AG04449 (cell line): ENCODE measurements at regions of chr6 and their contacts with region 1.

Region 1: DNA sequence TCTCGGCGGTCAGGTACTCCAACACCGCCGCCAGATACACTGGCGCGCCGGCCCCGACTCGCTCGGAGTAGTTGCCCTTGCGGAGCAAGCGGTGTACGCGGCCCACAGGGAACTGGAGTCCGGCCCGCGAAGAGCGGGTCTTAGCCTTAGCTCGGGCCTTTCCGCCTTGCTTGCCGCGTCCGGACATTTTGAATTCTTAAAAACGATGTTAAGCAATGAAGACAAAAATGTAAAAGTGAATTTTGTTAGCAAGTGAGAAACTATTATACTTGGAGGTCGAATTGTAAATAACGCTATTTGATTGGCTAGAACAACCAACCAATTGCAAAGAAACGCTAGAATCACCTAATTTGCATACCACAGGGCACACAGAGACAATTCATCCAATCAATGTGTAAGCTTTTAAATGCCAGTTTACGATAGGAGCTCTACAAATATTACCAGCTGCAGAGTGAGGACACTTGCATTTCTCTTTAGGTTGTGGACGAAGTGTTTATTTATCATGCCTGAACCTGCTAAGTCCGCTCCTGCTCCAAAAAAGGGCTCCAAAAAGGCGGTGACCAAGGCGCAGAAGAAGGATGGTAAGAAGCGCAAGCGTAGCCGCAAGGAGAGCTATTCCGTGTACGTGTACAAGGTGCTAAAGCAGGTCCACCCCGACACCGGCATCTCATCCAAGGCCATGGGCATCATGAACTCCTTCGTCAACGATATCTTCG is 112.0 kb downstream of the HFE start:
- DNase-seq: no peak
- H3K4me3 ChIP-seq: peak overlapping the region; percentile 85
- CTCF ChIP-seq: no peak

Region 2: GRCh38 chr6:26045065-26045927 is 153.9 kb before region 1 on chr6:
- CTCF ChIA-PET with region 1: no interaction called
- POLR2A ChIA-PET with region 1: interaction called, 14 read pairs
- DNase-seq: no peak
- H3K4me3 ChIP-seq: peak overlapping the region; percentile 64
- CTCF ChIP-seq: no peak

Region 3: GRCh38 chr6:26156076-26156849 is 43.0 kb before region 1 on chr6:
- CTCF ChIA-PET with region 1: no interaction called
- POLR2A ChIA-PET with region 1: interaction called, 80 read pairs
- DNase-seq: peak; percentile 28
- H3K4me3 ChIP-seq: peak overlapping the region; percentile 68
- CTCF ChIP-seq: no peak

Region 4: DNA sequence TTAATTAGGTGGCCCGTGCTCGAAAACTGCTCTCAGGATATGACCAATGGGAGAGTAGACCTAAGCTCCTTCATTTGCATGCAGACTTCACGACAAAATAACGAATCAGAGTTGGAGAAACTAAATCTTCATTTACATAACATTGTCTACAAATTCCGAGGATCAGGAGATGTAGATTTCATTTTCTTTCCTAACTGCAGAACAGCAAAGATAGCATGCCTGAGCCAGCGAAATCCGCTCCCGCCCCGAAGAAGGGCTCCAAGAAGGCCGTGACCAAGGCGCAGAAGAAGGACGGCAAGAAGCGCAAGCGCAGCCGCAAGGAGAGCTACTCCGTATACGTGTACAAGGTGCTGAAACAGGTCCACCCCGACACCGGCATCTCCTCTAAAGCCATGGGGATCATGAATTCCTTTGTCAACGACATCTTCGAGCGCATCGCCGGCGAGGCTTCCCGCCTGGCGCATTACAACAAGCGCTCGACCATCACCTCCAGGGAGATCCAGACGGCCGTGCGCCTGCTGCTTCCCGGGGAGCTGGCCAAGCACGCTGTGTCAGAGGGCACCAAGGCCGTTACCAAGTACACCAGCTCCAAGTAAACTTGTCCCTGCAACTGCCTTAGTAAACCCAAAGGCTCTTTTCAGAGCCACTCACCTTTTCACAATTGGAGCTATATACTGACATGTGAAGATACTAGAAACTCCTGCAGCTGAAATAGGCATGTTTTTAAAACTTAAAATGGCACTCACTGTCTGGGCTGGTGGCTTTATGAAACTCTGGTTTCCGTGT is 15.4 kb before region 1 on chr6:
- CTCF ChIA-PET with region 1: interaction called, 21 read pairs
- POLR2A ChIA-PET with region 1: interaction called, 63 read pairs
- DNase-seq: no peak
- H3K4me3 ChIP-seq: peak overlapping the region; percentile 57
- CTCF ChIP-seq: no peak

Region 5: GRCh38 chr6:26223650-26224546 is 24.7 kb after region 1 on chr6:
- CTCF ChIA-PET with region 1: no interaction called
- POLR2A ChIA-PET with region 1: interaction called, 27 read pairs
- DNase-seq: no peak
- H3K4me3 ChIP-seq: peak overlapping the region; percentile 69
- CTCF ChIP-seq: no peak

Region 6: DNA sequence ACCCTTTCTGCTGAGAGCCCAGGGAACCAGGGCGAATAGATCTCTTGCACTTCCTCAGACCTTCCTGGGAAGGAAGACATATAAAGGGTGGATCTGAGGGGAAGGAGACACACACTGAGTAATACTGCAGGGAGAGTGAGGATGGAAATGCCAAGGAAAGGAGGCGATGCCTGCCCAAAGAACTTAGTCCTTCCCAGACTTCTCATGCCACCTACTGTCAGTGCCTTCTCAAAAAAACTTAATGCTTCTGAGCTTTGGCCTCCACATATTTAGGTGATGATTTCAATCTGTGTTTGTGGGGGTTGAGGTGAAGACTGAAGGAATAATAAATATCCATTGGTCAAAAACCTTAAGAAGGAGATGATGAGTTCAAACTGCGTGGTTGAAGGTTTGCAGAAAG is 212.5 kb after region 1 on chr6:
- CTCF ChIA-PET with region 1: no interaction called
- POLR2A ChIA-PET with region 1: no interaction called
- DNase-seq: no peak
- H3K4me3 ChIP-seq: no peak overlapping the region
- CTCF ChIP-seq: no peak

Region 7: DNA sequence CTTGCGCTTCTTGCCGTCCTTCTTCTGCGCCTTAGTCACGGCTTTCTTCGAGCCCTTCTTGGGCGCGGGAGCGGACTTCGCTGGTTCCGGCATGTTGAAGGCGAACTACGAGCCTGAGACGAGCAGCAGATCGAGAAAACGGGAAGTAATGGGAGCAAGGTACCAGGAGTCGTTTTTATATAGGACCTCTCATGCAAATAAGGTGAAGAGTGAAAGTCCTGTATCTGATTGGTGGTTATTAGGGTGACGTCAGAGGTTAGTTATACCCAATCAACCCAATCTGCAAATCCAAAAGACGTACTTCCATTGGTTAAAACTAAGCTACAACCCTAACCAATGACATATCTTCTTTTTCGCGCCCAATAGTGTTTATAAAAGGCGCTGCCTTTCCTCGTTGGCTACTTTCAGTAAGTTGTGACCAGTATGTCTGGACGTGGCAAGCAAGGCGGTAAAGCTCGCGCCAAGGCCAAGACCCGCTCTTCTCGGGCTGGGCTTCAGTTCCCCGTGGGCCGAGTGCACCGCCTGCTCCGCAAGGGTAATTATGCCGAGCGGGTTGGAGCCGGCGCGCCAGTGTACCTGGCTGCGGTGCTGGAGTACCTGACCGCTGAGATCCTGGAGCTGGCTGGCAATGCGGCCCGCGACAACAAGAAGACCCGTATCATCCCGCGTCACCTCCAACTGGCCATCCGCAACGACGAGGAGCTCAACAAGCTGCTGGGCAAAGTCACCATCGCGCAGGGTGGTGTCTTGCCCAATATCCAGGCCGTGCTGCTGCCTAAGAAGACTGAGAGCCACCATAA is 947.7 kb after region 1 on chr6:
- CTCF ChIA-PET with region 1: no interaction called
- POLR2A ChIA-PET with region 1: interaction called, 11 read pairs
- DNase-seq: peak; percentile 100
- H3K4me3 ChIP-seq: peak overlapping the region; percentile 88
- CTCF ChIP-seq: no peak